ENCODE measurements at regions of chr13 and their contacts with region 1.

Region 1: GRCh38 chr13:73059460-73060201 is 826 bp downstream of the KLF5 start:
- DNase-seq: no peak
- H3K4me3 ChIP-seq: peak overlapping the region; percentile 81
- H3K27ac ChIP-seq: peak overlapping the region; percentile 61
- H3K27me3 ChIP-seq: no peaks in the 10 kb centered on the region
- CTCF ChIP-seq: no peak

Region 2: DNA sequence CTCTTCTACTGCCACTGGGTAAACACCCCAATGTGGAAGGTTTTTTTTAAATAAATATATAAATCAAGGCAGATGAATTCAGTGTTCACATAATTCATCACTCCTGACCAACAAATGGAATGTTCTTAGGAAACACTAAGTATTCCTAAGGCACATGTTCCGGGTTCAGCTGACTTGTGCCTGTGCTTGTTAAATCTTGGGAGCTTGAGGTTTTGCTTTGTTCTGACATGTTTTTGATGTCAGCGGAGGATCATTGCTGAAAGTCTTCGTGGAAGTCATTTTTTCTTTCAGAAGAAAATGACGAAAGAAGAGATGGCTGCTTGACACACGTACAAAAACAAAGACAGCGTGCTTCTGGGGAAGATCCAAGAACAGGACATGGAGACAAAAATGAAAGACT is 518.0 kb before region 1 on chr13:
- CTCF ChIA-PET with region 1: no interaction called
- POLR2A ChIA-PET with region 1: no interaction called
- DNase-seq: no peak
- H3K4me3 ChIP-seq: no peak overlapping the region
- H3K27ac ChIP-seq: no peak overlapping the region
- H3K27me3 ChIP-seq: no peaks in the 10 kb centered on the region
- CTCF ChIP-seq: no peak

Region 3: DNA sequence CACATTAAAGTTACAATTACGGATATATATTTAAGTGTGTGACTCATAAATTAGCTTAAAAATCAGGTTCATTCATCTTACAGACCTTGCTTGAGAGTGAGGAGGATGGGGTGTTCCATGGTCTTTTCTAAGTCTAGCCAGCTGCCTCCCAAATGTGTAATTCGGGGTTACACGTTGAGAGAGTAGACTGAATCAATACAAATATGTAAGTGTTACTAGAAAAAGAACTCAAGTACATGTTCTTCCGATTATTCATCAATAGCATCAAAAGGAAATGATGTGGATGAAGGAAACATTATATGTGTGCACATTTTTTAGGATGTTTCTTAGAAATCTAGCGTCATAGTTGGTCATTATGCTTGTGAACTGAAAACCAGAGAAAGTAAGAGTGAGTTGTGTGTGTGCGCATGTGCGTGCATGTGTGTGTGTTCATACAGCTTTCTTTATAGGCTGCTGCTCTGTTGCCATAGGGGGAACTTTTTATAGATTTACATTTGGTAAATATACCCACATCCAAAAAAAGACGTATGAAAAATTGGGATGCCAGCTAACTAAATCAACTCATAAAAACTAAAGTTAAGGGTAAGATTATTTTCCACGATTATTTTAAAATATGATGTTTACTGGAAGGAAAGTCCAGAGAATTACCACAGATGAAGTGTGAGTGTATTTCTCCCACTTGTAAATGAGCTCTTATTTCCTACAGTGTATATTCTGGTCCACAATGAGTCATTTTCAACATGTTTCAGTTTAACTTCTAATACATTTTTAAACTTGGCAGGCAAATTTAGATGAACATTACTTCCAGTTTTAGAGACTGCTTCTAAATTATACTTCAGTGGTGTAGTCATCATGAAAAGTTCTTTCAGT is 195.3 kb before region 1 on chr13:
- CTCF ChIA-PET with region 1: no interaction called
- POLR2A ChIA-PET with region 1: interaction called, 10 read pairs
- DNase-seq: peak; percentile 15
- H3K4me3 ChIP-seq: no peak overlapping the region
- H3K27ac ChIP-seq: no peak overlapping the region
- H3K27me3 ChIP-seq: no peaks in the 10 kb centered on the region
- CTCF ChIP-seq: no peak

Region 4: GRCh38 chr13:73081256-73081915 is 21.8 kb after region 1 on chr13:
- CTCF ChIA-PET with region 1: no interaction called
- POLR2A ChIA-PET with region 1: no interaction called
- DNase-seq: no peak
- H3K4me3 ChIP-seq: no peak overlapping the region
- H3K27ac ChIP-seq: no peak overlapping the region
- H3K27me3 ChIP-seq: no peaks in the 10 kb centered on the region
- CTCF ChIP-seq: no peak

Region 5: DNA sequence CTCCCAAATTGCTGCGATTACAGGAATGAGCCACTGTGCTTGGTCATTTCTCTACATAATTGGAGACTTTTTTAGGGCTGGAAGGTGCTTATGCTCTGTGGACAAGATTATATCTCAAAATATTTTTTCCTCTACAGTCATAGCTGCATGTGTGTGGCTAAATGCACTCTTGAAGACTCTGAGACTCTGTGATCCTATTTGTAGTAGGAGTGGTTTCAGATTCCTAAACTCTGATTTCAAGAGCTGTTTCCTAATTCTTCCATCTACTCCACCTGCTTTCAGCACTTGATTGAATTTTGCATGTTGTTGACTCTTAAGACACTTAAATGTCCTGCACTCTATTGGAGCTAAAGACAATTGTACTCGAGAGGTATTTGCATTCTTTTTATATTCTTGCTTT is 77.1 kb after region 1 on chr13:
- CTCF ChIA-PET with region 1: no interaction called
- POLR2A ChIA-PET with region 1: interaction called, 11 read pairs
- DNase-seq: no peak
- H3K4me3 ChIP-seq: no peak overlapping the region
- H3K27ac ChIP-seq: no peak overlapping the region
- H3K27me3 ChIP-seq: no peaks in the 10 kb centered on the region
- CTCF ChIP-seq: no peak

Region 6: DNA sequence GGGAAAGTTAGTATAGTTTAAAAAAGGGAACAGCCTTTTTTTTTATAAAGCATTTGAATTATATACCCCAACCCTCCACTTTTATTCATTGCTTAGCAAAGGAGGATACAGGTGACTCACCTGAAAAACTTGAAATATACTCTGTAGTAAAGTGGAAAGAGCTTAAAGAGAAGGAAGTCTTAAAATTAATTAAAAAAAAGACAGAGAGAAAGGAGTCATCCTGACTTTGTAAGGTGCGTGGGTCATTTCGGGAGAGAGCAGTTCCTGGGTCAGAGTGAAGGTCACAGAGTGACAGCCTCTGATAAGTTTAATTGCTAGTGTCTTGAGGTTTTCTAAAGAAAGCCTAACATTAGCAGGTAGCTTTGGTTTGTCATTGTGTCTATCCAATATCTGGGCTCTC is 309.5 kb after region 1 on chr13:
- CTCF ChIA-PET with region 1: interaction called, 11 read pairs
- POLR2A ChIA-PET with region 1: no interaction called
- DNase-seq: no peak
- H3K4me3 ChIP-seq: no peak overlapping the region
- H3K27ac ChIP-seq: no peak overlapping the region
- H3K27me3 ChIP-seq: peaks cover 6% of the 10 kb centered on the region
- CTCF ChIP-seq: no peak